ENCODE measurements at regions of chr10 and their contacts with region 1.

Region 1: GRCh38 chr10:71209352-71209715 is 3.0 kb upstream of the UNC5B start:
- DNase-seq: no peak
- H3K4me3 ChIP-seq: no peak overlapping the region
- H3K27ac ChIP-seq: no peak overlapping the region
- H3K4me1 ChIP-seq: peaks cover 15 to 40% (median 34%) of the 10 kb centered on the region in 4 donors
- H3K27me3 ChIP-seq: peaks cover 0 to 18% (median 3%) of the 10 kb centered on the region in 4 donors
- CTCF ChIP-seq: no peak
- EP300 ChIP-seq: no peak
- POLR2A ChIP-seq: no peak

Region 2: DNA sequence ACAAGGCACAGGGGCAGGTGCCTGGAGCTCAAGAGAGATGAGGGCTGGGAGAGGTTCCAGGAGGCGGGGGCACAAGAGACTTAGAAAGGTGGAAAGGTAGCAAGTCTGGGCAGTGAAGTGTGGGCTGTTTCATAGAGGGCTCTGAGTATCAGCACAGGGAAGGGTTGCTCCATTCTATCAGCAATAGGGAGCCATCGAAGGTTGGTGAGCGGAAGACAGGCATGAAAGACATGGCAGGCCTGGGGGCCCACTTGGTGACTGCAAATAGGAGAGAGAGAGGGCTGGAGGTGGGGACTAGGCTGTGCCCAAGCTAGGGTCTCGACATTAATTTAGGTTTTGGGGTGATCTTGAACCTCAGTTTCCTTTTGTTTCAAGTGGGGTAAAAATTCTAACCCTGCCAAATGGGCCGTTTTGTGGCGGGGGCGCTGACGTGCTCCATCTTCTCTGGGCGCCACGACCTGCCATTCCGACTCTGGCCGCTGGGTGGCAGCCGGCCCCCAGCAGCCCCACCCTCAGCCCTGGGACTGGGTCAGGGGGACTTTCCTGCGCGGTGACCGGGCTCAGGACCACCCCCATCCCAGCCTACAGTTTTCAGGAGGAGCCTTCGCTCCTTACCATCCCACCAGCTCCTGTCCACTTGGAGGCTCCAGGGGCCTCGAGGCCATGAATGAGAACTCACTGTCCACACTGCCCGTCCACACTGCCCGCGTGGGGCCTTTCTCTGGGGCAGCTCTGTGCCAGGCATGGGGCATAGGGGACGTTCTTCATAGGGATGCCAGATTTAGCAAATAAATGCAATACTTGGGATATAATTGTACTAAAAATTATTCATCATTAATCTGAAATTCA is 283.7 kb before region 1 on chr10:
- intact Hi-C with region 1: loop called (anchors 2 kb)
- DNase-seq: no peak
- H3K4me3 ChIP-seq: no peak overlapping the region
- H3K27ac ChIP-seq: no peak overlapping the region
- H3K4me1 ChIP-seq: peaks cover 0 to 6% (median 3%) of the 10 kb centered on the region in 4 donors
- H3K27me3 ChIP-seq: no peaks in the 10 kb centered on the region
- CTCF ChIP-seq: peak; percentile 87 to 99 (median 93)
- EP300 ChIP-seq: no peak
- POLR2A ChIP-seq: no peak

Region 3: GRCh38 chr10:71075086-71075758 is 134.1 kb before region 1 on chr10:
- intact Hi-C with region 1: no loop called
- DNase-seq: no peak
- H3K4me3 ChIP-seq: no peak overlapping the region
- H3K27ac ChIP-seq: no peak overlapping the region
- H3K4me1 ChIP-seq: no peaks in the 10 kb centered on the region
- H3K27me3 ChIP-seq: peaks cover 0 to 4% (median 0%) of the 10 kb centered on the region in 4 donors
- CTCF ChIP-seq: no peak
- EP300 ChIP-seq: no peak
- POLR2A ChIP-seq: no peak

Region 4: DNA sequence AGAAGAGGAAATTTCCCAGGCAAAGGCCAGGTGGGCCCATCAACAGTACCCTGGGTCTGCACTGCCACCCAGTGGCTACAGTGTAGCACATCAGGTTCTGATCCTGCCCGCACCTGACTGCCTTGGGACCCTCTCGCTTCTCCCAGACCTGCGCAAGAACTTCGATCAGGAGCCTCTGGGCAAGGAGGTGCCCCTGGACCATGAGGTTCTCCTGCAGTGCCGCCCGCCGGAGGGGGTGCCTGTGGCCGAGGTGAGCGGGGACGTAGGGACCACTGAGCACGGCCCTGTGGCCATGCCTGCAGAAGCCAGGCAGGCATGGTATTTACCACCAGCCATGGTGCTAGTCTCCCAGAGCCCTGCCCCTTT is 75.8 kb after region 1 on chr10:
- intact Hi-C with region 1: loop called (anchors 5 kb)
- DNase-seq: no peak
- H3K4me3 ChIP-seq: no peak overlapping the region
- H3K27ac ChIP-seq: no peak overlapping the region
- H3K4me1 ChIP-seq: peaks cover 0 to 3% (median 0%) of the 10 kb centered on the region in 4 donors
- H3K27me3 ChIP-seq: no peaks in the 10 kb centered on the region
- CTCF ChIP-seq: peak; percentile 67 to 74 (median 71)
- EP300 ChIP-seq: no peak
- POLR2A ChIP-seq: no peak